Natural killer cell (primary cell): ENCODE measurements at regions of chr12 and their contacts with region 1.

Region 1: GRCh38 chr12:112125250-112125999 is at the start of gene TRAFD1:
- DNase-seq: peak; percentile 98 to 99
- ATAC-seq: peak; percentile 97 to 100 (median 98)
- H3K4me3 ChIP-seq: peak within 1 kb of the TSS; percentile 95
- H3K4me3 Mint-ChIP-seq: peak within 1 kb of the TSS; percentile 90
- H3K27ac ChIP-seq: peak within 1 kb of the TSS; percentile 92
- H3K27ac Mint-ChIP-seq: peak within 1 kb of the TSS; percentile 89 to 96
- H3K4me1 ChIP-seq: peaks cover 37% of the 10 kb centered on the region
- H3K4me1 Mint-ChIP-seq: peaks cover 18 to 28% of the 10 kb centered on the region in 2 donors
- H3K27me3 ChIP-seq: no peaks in the 10 kb centered on the region
- H3K27me3 Mint-ChIP-seq: peaks cover 4 to 7% of the 10 kb centered on the region in 2 donors
- CTCF ChIP-seq: no peak
- total RNA-seq, gene TRAFD1: 35.8 to 45.3 (median 45.2) TPM

Region 2: GRCh38 chr12:112012775-112013600 is 112.4 kb before region 1 on chr12 and contains the starts of genes ERP29 and TMEM116:
- intact Hi-C with region 1: loop called (anchors 10 kb)
- DNase-seq: peak; percentile 99 to 100
- ATAC-seq: peak; percentile 87 to 95 (median 90)
- H3K4me3 ChIP-seq: peak within 1 kb of the TSS; percentile 74
- H3K4me3 Mint-ChIP-seq: peak within 1 kb of the TSS; percentile 86
- H3K27ac ChIP-seq: peak within 1 kb of the TSS; percentile 93
- H3K27ac Mint-ChIP-seq: peak within 1 kb of the TSS; percentile 93 to 96
- H3K4me1 ChIP-seq: peaks cover 40% of the 10 kb centered on the region
- H3K4me1 Mint-ChIP-seq: peaks cover 39 to 54% of the 10 kb centered on the region in 2 donors
- H3K27me3 ChIP-seq: no peaks in the 10 kb centered on the region
- H3K27me3 Mint-ChIP-seq: no peaks in the 10 kb centered on the region
- CTCF ChIP-seq: peak; percentile 71
- total RNA-seq, gene ERP29: 51.6 to 74.9 (median 57.8) TPM
- total RNA-seq, gene TMEM116: 6.5 to 10.2 (median 10.1) TPM

Region 3: GRCh38 chr12:112046003-112046402 is 79.4 kb before region 1 on chr12:
- intact Hi-C with region 1: no loop called
- DNase-seq: no peak
- ATAC-seq: no peak
- H3K4me3 ChIP-seq: no peak overlapping the region
- H3K4me3 Mint-ChIP-seq: no peak overlapping the region
- H3K27ac ChIP-seq: no peak overlapping the region
- H3K27ac Mint-ChIP-seq: no peak overlapping the region
- H3K4me1 ChIP-seq: no peaks in the 10 kb centered on the region
- H3K4me1 Mint-ChIP-seq: no peaks in the 10 kb centered on the region
- H3K27me3 ChIP-seq: no peaks in the 10 kb centered on the region
- H3K27me3 Mint-ChIP-seq: no peaks in the 10 kb centered on the region
- CTCF ChIP-seq: no peak

Region 4: GRCh38 chr12:112108201-112109079 is 17.0 kb before region 1 on chr12 and contains the start of gene NAA25:
- intact Hi-C with region 1: loop called (anchors 1 kb)
- DNase-seq: peak; percentile 84 to 94
- ATAC-seq: peak; percentile 82 to 91 (median 87)
- H3K4me3 ChIP-seq: peak within 1 kb of the TSS; percentile 88
- H3K4me3 Mint-ChIP-seq: peak within 1 kb of the TSS; percentile 95
- H3K27ac ChIP-seq: peak within 1 kb of the TSS; percentile 80
- H3K27ac Mint-ChIP-seq: peak within 1 kb of the TSS; percentile 91 to 93
- H3K4me1 ChIP-seq: peaks cover 25% of the 10 kb centered on the region
- H3K4me1 Mint-ChIP-seq: peaks cover 33 to 34% of the 10 kb centered on the region in 2 donors
- H3K27me3 ChIP-seq: no peaks in the 10 kb centered on the region
- H3K27me3 Mint-ChIP-seq: no peaks in the 10 kb centered on the region
- CTCF ChIP-seq: no peak
- total RNA-seq, gene NAA25: 25.8 to 34.4 (median 30.7) TPM